AG04450 (cell line): ENCODE measurements at regions of chr13 and their contacts with region 1.

Region 1: DNA sequence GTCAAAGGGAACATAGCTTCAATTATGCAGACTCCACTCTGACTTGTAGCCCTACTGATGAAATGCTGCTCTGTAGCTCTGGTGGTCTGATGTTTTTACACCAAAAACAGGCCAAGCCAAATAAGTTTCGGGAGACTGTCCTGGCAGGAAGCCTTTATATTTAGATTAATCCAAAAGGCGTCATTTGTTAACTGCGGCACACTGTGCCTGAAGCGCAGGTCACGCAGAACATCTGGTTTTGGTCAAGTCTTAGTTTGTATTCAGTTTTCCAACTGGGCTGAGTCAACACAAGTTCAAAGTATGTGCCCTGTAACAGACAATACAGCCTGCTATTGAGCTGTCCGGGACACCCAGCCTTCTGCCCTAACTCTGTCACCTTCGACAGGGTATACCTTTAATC is 154.6 kb upstream of the IPO5 start:
- DNase-seq: no peak
- H3K4me3 ChIP-seq: no peak overlapping the region
- H3K27ac ChIP-seq: no peak overlapping the region
- H3K27me3 ChIP-seq: peaks cover 3% of the 10 kb centered on the region
- CTCF ChIP-seq: no peak

Region 2: DNA sequence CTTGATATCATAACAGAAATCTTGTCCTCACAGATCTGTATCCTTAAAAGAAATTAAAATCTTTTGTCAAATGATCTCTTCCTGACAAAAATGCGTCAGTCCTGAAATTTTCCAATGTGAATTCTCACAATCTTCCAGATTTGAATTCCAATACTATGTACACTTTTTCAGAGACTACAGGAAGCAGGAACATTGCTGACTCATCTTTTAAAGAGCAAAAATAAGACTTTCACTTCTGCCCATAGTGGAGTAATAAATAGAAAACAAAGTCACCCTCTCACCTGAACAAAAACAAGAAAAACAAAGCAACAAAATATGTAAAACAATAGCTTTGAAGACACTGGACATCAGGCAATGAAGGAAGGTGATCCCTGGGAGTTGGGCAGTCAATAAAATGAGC is 12.3 kb before region 1 on chr13:
- CTCF ChIA-PET with region 1: interaction called, 10 read pairs
- POLR2A ChIA-PET with region 1: no interaction called
- DNase-seq: no peak
- H3K4me3 ChIP-seq: no peak overlapping the region
- H3K27ac ChIP-seq: no peak overlapping the region
- H3K27me3 ChIP-seq: no peaks in the 10 kb centered on the region
- CTCF ChIP-seq: no peak